ENCODE measurements at regions of chr11 and their contacts with region 1.

Region 1: GRCh38 chr11:6757373-6757967 is 14.3 kb downstream of the OR2AG2 start:
- DNase-seq: peak in 8 of 9 donors; percentile 30 to 67 (median 56)
- ATAC-seq: peak; percentile 84
- H3K4me3 ChIP-seq: no peak overlapping the region
- H3K4me3 Mint-ChIP-seq: no peak overlapping the region
- H3K27ac ChIP-seq: no peak overlapping the region
- H3K27ac Mint-ChIP-seq: peak overlapping the region in 3 of 9 donors; percentile 22 to 34 (median 28)
- H3K4me1 ChIP-seq: no peaks in the 10 kb centered on the region
- H3K4me1 Mint-ChIP-seq: peaks cover 0 to 31% (median 10%) of the 10 kb centered on the region in 7 donors
- H3K27me3 ChIP-seq: peaks cover 0 to 7% of the 10 kb centered on the region in 2 donors
- H3K27me3 Mint-ChIP-seq: peaks cover 3 to 25% (median 5%) of the 10 kb centered on the region in 5 donors

Region 2: DNA sequence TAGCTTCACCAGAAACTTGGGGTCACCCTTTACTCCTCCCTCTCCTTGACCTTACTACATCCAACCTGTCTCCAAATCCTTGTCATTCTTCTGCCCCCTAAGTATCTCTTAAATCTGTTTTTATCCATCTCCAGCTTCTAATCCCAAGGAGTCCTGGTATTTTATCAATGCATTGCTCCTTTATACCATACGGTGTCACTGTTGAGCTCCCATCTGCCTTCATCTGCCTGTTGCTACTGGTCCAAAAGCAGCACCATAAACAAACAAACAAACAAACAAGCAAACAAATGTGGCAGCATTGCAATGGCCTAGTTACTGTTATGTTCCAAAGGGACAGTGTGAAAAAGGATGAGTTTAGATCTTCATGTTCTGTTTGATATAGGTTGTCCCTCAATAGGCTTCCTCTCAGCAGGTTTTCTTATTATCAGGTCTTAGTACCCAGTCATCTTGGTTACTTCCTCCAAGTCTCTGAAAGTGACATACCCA is 226.2 kb before region 1 on chr11:
- CTCF ChIA-PET with region 1: interaction called, 24 read pairs
- POLR2A ChIA-PET with region 1: no interaction called
- intact Hi-C with region 1: loop called (anchors 1 kb)
- DNase-seq: peak in 7 of 9 donors; percentile 7 to 51 (median 39)
- ATAC-seq: peak; percentile 83
- H3K4me3 ChIP-seq: no peak overlapping the region
- H3K4me3 Mint-ChIP-seq: no peak overlapping the region
- H3K27ac ChIP-seq: no peak overlapping the region
- H3K27ac Mint-ChIP-seq: no peak overlapping the region
- H3K4me1 ChIP-seq: peaks cover 4 to 5% of the 10 kb centered on the region in 2 donors
- H3K4me1 Mint-ChIP-seq: peaks cover 5 to 14% (median 11%) of the 10 kb centered on the region in 7 donors
- H3K27me3 ChIP-seq: no peaks in the 10 kb centered on the region
- H3K27me3 Mint-ChIP-seq: no peaks in the 10 kb centered on the region

Region 3: DNA sequence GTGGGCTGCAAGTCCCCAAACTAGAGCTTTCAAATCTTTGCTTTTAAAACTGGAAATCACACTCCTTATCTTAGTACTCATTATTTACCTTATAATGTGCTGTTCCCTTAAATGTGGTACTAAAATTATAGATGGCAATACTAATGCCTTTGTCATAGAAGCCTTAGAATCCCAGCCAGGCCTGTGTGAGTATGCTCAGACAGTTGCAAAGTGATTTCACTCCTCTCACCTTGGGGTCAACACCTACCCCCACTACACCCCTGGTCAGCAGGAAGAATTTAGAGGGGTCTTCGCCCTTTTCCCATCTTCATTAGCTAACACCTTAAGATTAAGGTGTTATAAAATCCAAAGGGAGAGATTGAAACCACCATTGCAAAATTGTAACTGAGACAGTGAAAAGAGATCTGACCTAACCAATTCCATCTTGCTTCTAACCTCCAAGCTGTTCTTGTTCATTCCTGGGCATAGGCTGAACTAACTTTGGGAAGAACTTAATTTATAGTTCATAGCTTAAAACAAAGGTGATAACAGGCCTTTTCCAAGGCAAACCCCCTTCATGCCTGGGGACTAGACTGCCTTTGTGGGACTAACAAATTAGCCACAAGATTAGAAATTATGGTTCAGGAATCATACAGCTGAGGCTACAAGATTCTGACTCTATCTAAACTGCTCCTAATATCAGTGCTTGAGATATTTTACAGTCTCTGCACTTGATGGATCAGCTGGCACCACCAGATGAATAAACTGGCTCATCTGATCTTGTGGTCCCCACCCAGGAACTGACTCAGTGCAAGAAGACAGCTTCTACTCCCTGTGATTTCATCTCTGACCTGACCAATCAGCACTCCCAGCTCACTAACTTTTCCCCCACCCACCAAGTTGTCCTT is 63.9 kb before region 1 on chr11:
- CTCF ChIA-PET with region 1: interaction called, 10 read pairs
- POLR2A ChIA-PET with region 1: interaction called, 3 read pairs
- intact Hi-C with region 1: no loop called
- DNase-seq: peak in 5 of 9 donors; percentile 19 to 52 (median 33)
- ATAC-seq: peak; percentile 47
- H3K4me3 ChIP-seq: no peak overlapping the region
- H3K4me3 Mint-ChIP-seq: peak overlapping the region in 2 of 10 donors; percentile 22 to 52
- H3K27ac ChIP-seq: no peak overlapping the region
- H3K27ac Mint-ChIP-seq: peak overlapping the region; percentile 6 to 86 (median 65)
- H3K4me1 ChIP-seq: peaks cover 0 to 9% of the 10 kb centered on the region in 2 donors
- H3K4me1 Mint-ChIP-seq: peaks cover 11 to 34% (median 20%) of the 10 kb centered on the region in 7 donors
- H3K27me3 ChIP-seq: no peaks in the 10 kb centered on the region
- H3K27me3 Mint-ChIP-seq: no peaks in the 10 kb centered on the region

Region 4: DNA sequence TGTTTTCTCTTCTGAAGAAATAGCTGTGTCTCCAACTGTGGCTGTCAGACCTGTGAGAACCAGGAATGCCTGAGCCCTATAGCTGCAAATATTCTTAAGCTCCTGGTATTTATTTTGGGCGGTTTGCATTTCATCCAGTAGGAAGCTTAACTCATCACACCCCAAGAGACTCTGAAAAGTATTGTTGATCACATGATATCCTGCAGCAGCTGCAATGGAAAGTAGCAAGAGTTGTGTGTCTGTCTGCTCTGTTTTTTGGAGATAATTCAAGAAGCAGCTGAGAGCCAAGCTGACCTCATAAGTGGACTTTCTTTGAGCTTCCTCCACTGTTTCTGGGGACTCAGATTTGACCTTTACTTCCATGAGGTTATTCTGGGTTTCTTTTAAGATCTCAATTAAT is 37.9 kb before region 1 on chr11:
- CTCF ChIA-PET with region 1: interaction called, 19 read pairs
- POLR2A ChIA-PET with region 1: no interaction called
- intact Hi-C with region 1: no loop called
- DNase-seq: no peak
- ATAC-seq: no peak
- H3K4me3 ChIP-seq: no peak overlapping the region
- H3K4me3 Mint-ChIP-seq: peak overlapping the region in 3 of 10 donors; percentile 12 to 70 (median 12)
- H3K27ac ChIP-seq: peak overlapping the region; percentile 4
- H3K27ac Mint-ChIP-seq: peak overlapping the region in 8 of 9 donors; percentile 16 to 91 (median 64)
- H3K4me1 ChIP-seq: peaks cover 27 to 46% of the 10 kb centered on the region in 2 donors
- H3K4me1 Mint-ChIP-seq: peaks cover 22 to 82% (median 72%) of the 10 kb centered on the region in 7 donors
- H3K27me3 ChIP-seq: no peaks in the 10 kb centered on the region
- H3K27me3 Mint-ChIP-seq: no peaks in the 10 kb centered on the region

Region 5: GRCh38 chr11:6746086-6746618 is 11.3 kb before region 1 on chr11:
- CTCF ChIA-PET with region 1: interaction called, 425 read pairs
- POLR2A ChIA-PET with region 1: interaction called, 76 read pairs
- intact Hi-C with region 1: loop called (anchors 1 kb)
- DNase-seq: peak in 8 of 9 donors; percentile 32 to 66 (median 64)
- ATAC-seq: peak; percentile 89
- H3K4me3 ChIP-seq: peak overlapping the region; percentile 80
- H3K4me3 Mint-ChIP-seq: no peak overlapping the region
- H3K27ac ChIP-seq: peak overlapping the region; percentile 85
- H3K27ac Mint-ChIP-seq: no peak overlapping the region
- H3K4me1 ChIP-seq: peaks cover 18 to 37% of the 10 kb centered on the region in 2 donors
- H3K4me1 Mint-ChIP-seq: peaks cover 26 to 48% (median 29%) of the 10 kb centered on the region in 7 donors
- H3K27me3 ChIP-seq: no peaks in the 10 kb centered on the region
- H3K27me3 Mint-ChIP-seq: no peaks in the 10 kb centered on the region

Region 6: GRCh38 chr11:6780829-6781228 is 23.4 kb after region 1 on chr11:
- CTCF ChIA-PET with region 1: no interaction called
- POLR2A ChIA-PET with region 1: no interaction called
- intact Hi-C with region 1: no loop called
- DNase-seq: no peak
- ATAC-seq: no peak
- H3K4me3 ChIP-seq: no peak overlapping the region
- H3K4me3 Mint-ChIP-seq: no peak overlapping the region
- H3K27ac ChIP-seq: no peak overlapping the region
- H3K27ac Mint-ChIP-seq: no peak overlapping the region
- H3K4me1 ChIP-seq: no peaks in the 10 kb centered on the region
- H3K4me1 Mint-ChIP-seq: no peaks in the 10 kb centered on the region
- H3K27me3 ChIP-seq: no peaks in the 10 kb centered on the region
- H3K27me3 Mint-ChIP-seq: peaks cover 0 to 28% (median 20%) of the 10 kb centered on the region in 5 donors

Region 7: DNA sequence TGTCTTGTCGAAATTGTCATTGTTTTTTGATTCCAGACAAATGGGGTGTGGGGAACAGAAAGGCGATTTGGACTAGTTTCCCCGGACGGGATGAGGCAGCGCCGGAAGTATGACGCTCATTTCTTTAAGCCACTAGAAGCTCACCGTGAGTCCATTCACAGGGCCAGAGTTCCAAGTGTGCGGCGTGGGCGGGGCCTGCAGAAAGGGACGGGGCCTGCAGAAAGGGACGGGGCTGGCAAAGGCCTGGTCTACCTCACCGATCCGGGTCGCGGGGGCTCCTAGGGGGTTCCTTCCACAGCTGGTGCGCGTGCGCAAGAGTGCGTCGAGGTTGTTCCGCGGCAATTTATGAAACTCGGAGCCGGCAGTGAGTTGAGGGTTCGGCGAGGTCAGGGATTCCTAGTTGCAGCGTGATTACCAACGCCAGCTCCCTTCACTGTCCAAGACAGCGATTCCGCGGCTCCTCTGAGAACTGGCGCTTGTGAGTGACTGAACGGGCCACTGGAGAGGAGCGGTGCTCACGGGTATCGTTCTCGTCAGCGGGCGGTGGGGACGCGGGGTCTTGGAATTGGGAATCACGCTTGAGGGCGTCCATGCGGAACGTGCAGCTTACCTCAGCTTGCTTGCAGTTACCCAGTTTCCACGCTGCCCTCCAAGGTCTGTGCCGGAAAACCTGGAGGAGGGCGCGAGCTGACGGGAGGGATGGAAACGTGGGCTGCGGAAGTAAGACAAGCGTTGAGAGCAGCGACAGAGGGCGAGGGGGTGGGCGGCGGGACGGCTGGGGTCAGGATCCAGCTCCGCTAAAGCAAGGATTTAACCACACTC is 168.9 kb after region 1 on chr11 and contains the start of gene ZNF215:
- CTCF ChIA-PET with region 1: no interaction called
- POLR2A ChIA-PET with region 1: no interaction called
- intact Hi-C with region 1: no loop called
- DNase-seq: peak in 4 of 9 donors; percentile 7 to 64 (median 34)
- ATAC-seq: peak; percentile 67
- H3K4me3 ChIP-seq: peak within 1 kb of the TSS; percentile 48
- H3K4me3 Mint-ChIP-seq: peak within 1 kb of the TSS; percentile 65 to 91 (median 78)
- H3K27ac ChIP-seq: peak within 1 kb of the TSS; percentile 47
- H3K27ac Mint-ChIP-seq: peak within 1 kb of the TSS in 3 of 9 donors; percentile 27 to 37 (median 34)
- H3K4me1 ChIP-seq: peaks cover 0 to 8% of the 10 kb centered on the region in 2 donors
- H3K4me1 Mint-ChIP-seq: peaks cover 7 to 36% (median 21%) of the 10 kb centered on the region in 7 donors
- H3K27me3 ChIP-seq: peaks cover 0 to 3% of the 10 kb centered on the region in 2 donors
- H3K27me3 Mint-ChIP-seq: peaks cover 30 to 83% (median 67%) of the 10 kb centered on the region in 5 donors
- total RNA-seq, gene ZNF215: 0.35 to 2.4 (median 0.55) TPM in 4 of 5 experiments, not detected in the other